GM12878 (cell line): ENCODE measurements at regions of chr17 and their contacts with region 1.

Region 1: GRCh38 chr17:3710951-3711383 is 12.7 kb upstream of the HASPIN start:
- DNase-seq: peak; percentile 100
- ATAC-seq: peak; percentile 98
- H3K4me3 ChIP-seq: no peak overlapping the region
- H3K27ac ChIP-seq: peak overlapping the region; percentile 68
- H3K4me1 ChIP-seq: peaks cover 27% of the 10 kb centered on the region
- H3K27me3 ChIP-seq: no peaks in the 10 kb centered on the region
- CTCF ChIP-seq: no peak
- EP300 ChIP-seq: peak; percentile 70 to 94; a peak in 3 of 4 replicates
- POLR2A ChIP-seq: no peak
- RAD21 ChIP-seq: no peak

Region 2: GRCh38 chr17:3675886-3676285 is 35.1 kb before region 1 on chr17:
- CTCF ChIA-PET with region 1: no interaction called
- POLR2A ChIA-PET with region 1: no interaction called
- RAD21 ChIA-PET with region 1: no interaction called
- SMC1A ChIA-PET with region 1: no interaction called
- in situ Hi-C with region 1: no loop called
- intact Hi-C with region 1: no loop called
- DNase-seq: no peak
- ATAC-seq: no peak
- H3K4me3 ChIP-seq: no peak overlapping the region
- H3K27ac ChIP-seq: no peak overlapping the region
- H3K4me1 ChIP-seq: no peaks in the 10 kb centered on the region
- H3K27me3 ChIP-seq: no peaks in the 10 kb centered on the region
- CTCF ChIP-seq: no peak
- EP300 ChIP-seq: no peak
- POLR2A ChIP-seq: no peak
- RAD21 ChIP-seq: no peak

Region 3: GRCh38 chr17:3695723-3696411 is 15.1 kb before region 1 on chr17 and contains the start of gene P2RX5:
- CTCF ChIA-PET with region 1: interaction called, 9 read pairs
- POLR2A ChIA-PET with region 1: interaction called, 8 read pairs
- RAD21 ChIA-PET with region 1: interaction called, 23 read pairs
- SMC1A ChIA-PET with region 1: interaction called, 17 read pairs
- in situ Hi-C with region 1: no loop called
- intact Hi-C with region 1: loop called (anchors 1 kb)
- DNase-seq: no peak
- ATAC-seq: peak; percentile 48
- H3K4me3 ChIP-seq: peak within 1 kb of the TSS; percentile 56
- H3K27ac ChIP-seq: peak within 1 kb of the TSS; percentile 61
- H3K4me1 ChIP-seq: peaks cover 32% of the 10 kb centered on the region
- H3K27me3 ChIP-seq: no peaks in the 10 kb centered on the region
- CTCF ChIP-seq: no peak
- EP300 ChIP-seq: no peak
- POLR2A ChIP-seq: peak; percentile 71
- RAD21 ChIP-seq: no peak
- polyA plus RNA-seq, gene P2RX5: 6.9 to 14.2 TPM

Region 4: DNA sequence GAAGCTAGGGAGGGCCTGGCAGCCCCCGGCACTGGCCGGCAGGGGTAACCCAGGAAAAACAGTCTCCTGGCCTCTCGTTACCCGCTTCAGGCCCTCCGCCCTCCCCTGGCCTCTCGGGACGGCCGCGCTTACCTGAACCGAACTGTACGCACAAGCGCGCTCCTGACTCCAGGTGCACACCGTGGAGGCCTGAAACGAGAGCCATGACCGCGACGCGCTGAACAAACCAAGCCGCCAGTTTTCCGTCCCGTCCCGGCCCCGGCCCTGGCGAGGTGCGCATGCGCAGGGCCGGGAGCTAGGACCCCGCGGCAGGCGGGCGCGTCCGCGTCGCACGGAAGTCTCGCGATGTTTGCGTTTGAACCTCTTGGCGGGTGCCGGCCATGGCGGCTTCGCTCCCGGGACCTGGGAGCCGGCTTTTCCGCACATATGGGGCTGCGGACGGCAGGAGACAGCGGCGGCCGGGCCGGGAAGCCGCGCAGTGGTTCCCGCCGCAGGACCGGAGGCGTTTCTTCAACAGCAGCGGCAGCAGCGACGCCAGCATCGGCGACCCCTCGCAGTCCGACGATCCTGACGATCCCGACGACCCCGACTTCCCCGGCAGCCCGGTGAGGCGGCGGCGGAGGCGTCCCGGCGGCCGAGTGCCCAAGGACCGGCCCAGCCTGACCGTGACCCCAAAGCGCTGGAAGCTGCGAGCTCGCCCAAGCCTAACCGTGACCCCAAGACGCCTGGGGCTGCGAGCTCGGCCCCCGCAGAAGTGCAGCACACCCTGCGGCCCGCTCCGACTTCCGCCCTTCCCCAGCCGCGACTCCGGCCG is 12.8 kb after region 1 on chr17 and contains the start of gene HASPIN:
- CTCF ChIA-PET with region 1: interaction called, 12 read pairs
- POLR2A ChIA-PET with region 1: interaction called, 5 read pairs
- RAD21 ChIA-PET with region 1: interaction called, 27 read pairs
- SMC1A ChIA-PET with region 1: interaction called, 33 read pairs
- in situ Hi-C with region 1: no loop called
- intact Hi-C with region 1: loop called (anchors 2 kb)
- DNase-seq: peak; percentile 62
- ATAC-seq: peak; percentile 93
- H3K4me3 ChIP-seq: peak within 1 kb of the TSS; percentile 93
- H3K27ac ChIP-seq: peak within 1 kb of the TSS; percentile 87
- H3K4me1 ChIP-seq: peaks cover 17% of the 10 kb centered on the region
- H3K27me3 ChIP-seq: no peaks in the 10 kb centered on the region
- CTCF ChIP-seq: peak in 2 of 3 experiments; percentile 12 to 17; a peak in 1 of 6 replicates
- EP300 ChIP-seq: no peak
- POLR2A ChIP-seq: peak; percentile 83
- RAD21 ChIP-seq: no peak
- polyA plus RNA-seq, gene HASPIN: 0.80 to 0.97 TPM

Region 5: DNA sequence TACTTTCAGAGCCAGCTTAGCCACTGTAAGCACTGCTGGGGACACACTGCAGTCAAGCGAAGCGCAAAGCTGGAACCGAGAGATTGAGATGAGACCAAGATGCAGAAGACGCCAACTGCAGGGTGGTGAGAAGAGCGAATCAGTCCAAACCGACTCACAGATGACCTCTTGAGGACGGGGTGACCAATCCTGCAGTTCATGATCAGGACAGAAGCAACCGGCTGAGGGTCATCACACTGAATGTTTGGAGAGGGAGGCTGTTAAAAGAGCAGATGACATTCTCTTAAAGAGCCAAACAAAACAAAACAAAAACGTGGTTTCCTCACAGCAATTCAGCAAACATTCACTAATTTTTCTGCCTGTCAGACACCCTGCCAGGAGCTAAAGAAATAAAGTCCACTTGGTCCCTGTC is 21.2 kb after region 1 on chr17:
- CTCF ChIA-PET with region 1: interaction called, 12 read pairs
- POLR2A ChIA-PET with region 1: interaction called, 5 read pairs
- RAD21 ChIA-PET with region 1: interaction called, 27 read pairs
- SMC1A ChIA-PET with region 1: interaction called, 16 read pairs
- in situ Hi-C with region 1: no loop called
- intact Hi-C with region 1: loop called (anchors 2 kb)
- DNase-seq: peak; percentile 60
- ATAC-seq: peak; percentile 98
- H3K4me3 ChIP-seq: no peak overlapping the region
- H3K27ac ChIP-seq: no peak overlapping the region
- H3K4me1 ChIP-seq: peaks cover 7% of the 10 kb centered on the region; the same call in 1 of the 2 replicates
- H3K27me3 ChIP-seq: no peaks in the 10 kb centered on the region
- CTCF ChIP-seq: peak; percentile 44 to 62 (median 48); a peak in 4 of 6 replicates
- EP300 ChIP-seq: no peak
- POLR2A ChIP-seq: no peak
- RAD21 ChIP-seq: peak; percentile 60

Region 6: DNA sequence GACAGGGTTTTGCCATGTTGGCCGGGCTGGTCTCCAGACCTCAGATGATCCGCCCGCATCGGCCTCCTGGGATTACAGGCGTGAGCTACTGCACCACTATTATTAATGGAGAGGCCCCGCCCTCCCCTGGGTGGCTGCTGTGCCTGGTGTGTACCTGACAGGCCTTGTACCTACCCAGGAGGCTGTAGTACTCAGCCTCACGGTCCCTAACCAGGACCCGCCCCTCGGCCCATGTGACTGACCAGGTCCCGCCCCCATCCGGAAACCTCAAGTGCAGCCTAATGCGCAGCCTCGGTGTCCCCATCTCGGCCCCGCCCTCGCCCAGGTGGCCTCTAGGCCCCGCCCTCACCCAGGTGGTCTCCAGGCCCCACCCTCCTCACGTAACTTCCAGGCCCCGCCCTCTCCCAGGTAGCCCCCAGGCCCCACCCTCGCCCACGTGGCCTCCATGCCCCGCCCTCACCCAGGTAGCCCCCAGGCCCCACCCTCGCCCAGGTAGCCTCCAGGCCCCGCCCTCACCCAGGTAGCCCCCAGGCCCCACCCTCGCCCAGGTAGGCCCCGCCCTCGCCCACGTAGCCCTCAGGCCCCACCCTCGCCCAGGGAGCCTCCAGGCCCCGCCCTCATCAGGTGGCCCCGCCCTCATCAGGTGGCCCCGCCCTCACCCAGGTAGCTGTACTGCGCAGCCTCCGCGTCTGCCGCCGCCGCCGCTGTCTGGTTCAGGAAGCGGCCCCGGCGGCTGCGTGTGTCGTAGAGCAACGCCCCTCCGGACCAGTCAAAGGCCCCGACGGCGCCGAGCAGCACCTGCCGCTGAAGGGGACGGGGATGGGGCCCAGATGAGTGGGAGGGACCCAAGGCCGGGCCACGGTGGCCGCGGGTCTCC is 43.7 kb after region 1 on chr17:
- CTCF ChIA-PET with region 1: no interaction called
- POLR2A ChIA-PET with region 1: no interaction called
- RAD21 ChIA-PET with region 1: no interaction called
- SMC1A ChIA-PET with region 1: no interaction called
- in situ Hi-C with region 1: no loop called
- intact Hi-C with region 1: no loop called
- DNase-seq: no peak
- ATAC-seq: peak; percentile 44
- H3K4me3 ChIP-seq: no peak overlapping the region
- H3K27ac ChIP-seq: no peak overlapping the region
- H3K4me1 ChIP-seq: no peaks in the 10 kb centered on the region; the same call in 1 of the 2 replicates
- H3K27me3 ChIP-seq: no peaks in the 10 kb centered on the region
- CTCF ChIP-seq: no peak
- EP300 ChIP-seq: no peak
- POLR2A ChIP-seq: peak; percentile 44; the same call in 1 of the 2 replicates
- RAD21 ChIP-seq: no peak